ENCODE measurements at regions of chr10 and their contacts with region 1.

Region 1: GRCh38 chr10:125048101-125048864 is 106.4 kb downstream of the ZRANB1 start:
- DNase-seq: peak; percentile 89
- H3K4me3 Mint-ChIP-seq: no peak overlapping the region
- H3K27ac Mint-ChIP-seq: peak overlapping the region; percentile 82
- H3K4me1 Mint-ChIP-seq: no peaks in the 10 kb centered on the region
- H3K27me3 Mint-ChIP-seq: no peaks in the 10 kb centered on the region
- CTCF ChIP-seq: peak; percentile 59

Region 2: GRCh38 chr10:125060826-125061556 is 12.7 kb after region 1 on chr10:
- CTCF ChIA-PET with region 1: interaction called, 14 read pairs
- intact Hi-C with region 1: no loop called
- DNase-seq: peak; percentile 74
- H3K4me3 Mint-ChIP-seq: no peak overlapping the region
- H3K27ac Mint-ChIP-seq: no peak overlapping the region
- H3K4me1 Mint-ChIP-seq: peaks cover 19% of the 10 kb centered on the region
- H3K27me3 Mint-ChIP-seq: no peaks in the 10 kb centered on the region
- CTCF ChIP-seq: peak; percentile 69

Region 3: DNA sequence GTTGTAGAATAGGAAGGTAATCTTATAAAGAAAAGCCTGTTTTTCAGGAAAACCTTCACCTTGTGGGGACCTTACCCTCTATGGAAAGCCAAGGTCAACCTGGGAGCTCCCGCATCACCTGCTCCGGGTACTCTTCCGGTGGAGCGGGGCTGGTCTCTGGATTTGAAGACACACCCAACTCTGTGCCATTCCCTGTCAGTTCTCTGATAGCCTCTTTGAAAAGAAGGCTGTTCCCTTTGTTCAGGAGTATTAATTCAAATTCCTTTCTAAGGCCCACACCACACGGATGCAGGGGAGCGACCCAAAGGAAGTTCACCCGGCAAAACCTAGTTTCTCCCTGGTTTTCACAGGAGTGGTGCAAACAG is 101.4 kb after region 1 on chr10:
- CTCF ChIA-PET with region 1: interaction called, 4 read pairs
- intact Hi-C with region 1: loop called (anchors 1 kb)
- DNase-seq: no peak
- H3K4me3 Mint-ChIP-seq: peak overlapping the region; percentile 5
- H3K27ac Mint-ChIP-seq: peak overlapping the region; percentile 42
- H3K4me1 Mint-ChIP-seq: peaks cover 58% of the 10 kb centered on the region
- H3K27me3 Mint-ChIP-seq: no peaks in the 10 kb centered on the region
- CTCF ChIP-seq: no peak

Region 4: DNA sequence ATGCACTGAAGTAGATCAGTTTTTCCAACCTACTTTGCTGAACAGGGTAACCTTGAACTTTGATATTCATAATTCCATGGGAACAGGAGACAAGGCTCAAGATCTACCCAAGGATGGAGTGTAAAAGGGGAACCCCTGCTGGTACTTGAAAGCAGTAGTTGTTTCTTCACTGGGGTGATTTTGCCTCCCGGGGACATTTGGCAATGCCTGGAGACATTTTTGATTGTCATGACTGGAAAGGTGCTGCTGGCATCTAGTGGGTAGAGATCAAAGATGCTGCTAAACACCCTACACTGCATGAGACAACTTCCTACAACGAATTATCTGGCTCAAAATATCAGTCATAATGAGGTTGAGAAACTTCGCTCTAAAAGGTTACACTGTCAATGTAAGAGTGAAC is 326.9 kb after region 1 on chr10:
- CTCF ChIA-PET with region 1: no interaction called
- intact Hi-C with region 1: loop called (anchors 10 kb)
- DNase-seq: peak; percentile 35
- H3K4me3 Mint-ChIP-seq: no peak overlapping the region
- H3K27ac Mint-ChIP-seq: no peak overlapping the region
- H3K4me1 Mint-ChIP-seq: peaks cover 7% of the 10 kb centered on the region
- H3K27me3 Mint-ChIP-seq: no peaks in the 10 kb centered on the region
- CTCF ChIP-seq: no peak

Measured in Calu3 (cell line).